ENCODE measurements at regions of chr10 and their contacts with region 1.

Region 1: GRCh38 chr10:47165711-47166524 is 134.1 kb upstream of the GDF10 start:
- DNase-seq: peak; percentile 22
- H3K4me3 ChIP-seq: peak overlapping the region in 1 of 2 donors; percentile 22
- H3K27ac ChIP-seq: peak overlapping the region in 1 of 2 donors; percentile 25
- H3K4me1 ChIP-seq: no peaks in the 10 kb centered on the region
- H3K27me3 ChIP-seq: no peaks in the 10 kb centered on the region
- CTCF ChIP-seq: no peak
- POLR2A ChIP-seq: no peak

Region 2: GRCh38 chr10:47261121-47261520 is 95.2 kb after region 1 on chr10:
- intact Hi-C with region 1: no loop called
- DNase-seq: no peak
- H3K4me3 ChIP-seq: no peak overlapping the region
- H3K27ac ChIP-seq: no peak overlapping the region
- H3K4me1 ChIP-seq: no peaks in the 10 kb centered on the region
- H3K27me3 ChIP-seq: no peaks in the 10 kb centered on the region
- CTCF ChIP-seq: no peak
- POLR2A ChIP-seq: no peak

Region 3: GRCh38 chr10:47299611-47300428 is 133.9 kb after region 1 on chr10 and contains the start of gene GDF10:
- intact Hi-C with region 1: loop called (anchors 5 kb)
- DNase-seq: no peak
- H3K4me3 ChIP-seq: peak within 1 kb of the TSS; percentile 28 to 30
- H3K27ac ChIP-seq: no peak within 1 kb of the TSS
- H3K4me1 ChIP-seq: no peaks in the 10 kb centered on the region
- H3K27me3 ChIP-seq: peaks cover 3% of the 10 kb centered on the region
- CTCF ChIP-seq: no peak
- POLR2A ChIP-seq: no peak
- total RNA-seq, gene GDF10: 0.32 to 28.0 TPM

Region 4: GRCh38 chr10:47421057-47421952 is 255.4 kb after region 1 on chr10:
- intact Hi-C with region 1: no loop called
- DNase-seq: no peak
- H3K4me3 ChIP-seq: no peak overlapping the region
- H3K27ac ChIP-seq: no peak overlapping the region
- H3K4me1 ChIP-seq: no peaks in the 10 kb centered on the region
- H3K27me3 ChIP-seq: no peaks in the 10 kb centered on the region
- CTCF ChIP-seq: no peak
- POLR2A ChIP-seq: no peak